ENCODE measurements at regions of chr5 and their contacts with region 1.

Region 1: DNA sequence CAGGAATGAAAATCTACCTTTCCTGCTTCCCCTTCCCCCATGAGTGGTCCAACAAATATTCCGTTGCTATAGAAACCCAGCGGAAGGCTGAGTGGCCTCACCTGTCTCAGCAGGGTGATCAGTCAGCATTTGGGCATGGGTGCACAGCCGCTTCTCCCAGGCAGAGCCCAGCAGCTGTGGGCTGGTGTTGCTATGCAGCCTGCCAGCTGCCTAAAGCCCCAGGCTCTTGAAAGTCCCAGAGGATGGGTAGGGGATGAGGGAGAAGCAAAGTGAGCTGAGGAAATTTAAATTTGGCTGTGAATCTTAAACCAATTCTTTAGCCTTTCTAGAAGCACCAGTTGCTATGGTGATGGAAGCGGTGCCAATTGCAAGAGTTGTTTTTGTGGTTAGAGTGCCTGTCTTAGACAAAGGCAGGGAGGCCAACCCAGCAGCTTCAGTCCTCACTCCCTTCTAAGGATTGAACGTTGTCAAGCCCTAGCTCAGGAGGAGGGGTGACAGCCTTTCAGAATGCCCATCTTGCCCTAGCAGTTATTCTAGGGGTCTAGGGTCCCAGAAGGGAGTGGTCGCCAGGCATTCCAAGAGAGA is 151.5 kb upstream of the PITX1 start:
- DNase-seq: no peak
- ATAC-seq: no peak
- H3K4me3 ChIP-seq: no peak overlapping the region
- H3K27ac ChIP-seq: no peak overlapping the region
- H3K4me1 ChIP-seq: no peaks in the 10 kb centered on the region
- CTCF ChIP-seq: no peak
- EP300 ChIP-seq: no peak
- POLR2A ChIP-seq: no peak
- RAD21 ChIP-seq: no peak

Region 2: DNA sequence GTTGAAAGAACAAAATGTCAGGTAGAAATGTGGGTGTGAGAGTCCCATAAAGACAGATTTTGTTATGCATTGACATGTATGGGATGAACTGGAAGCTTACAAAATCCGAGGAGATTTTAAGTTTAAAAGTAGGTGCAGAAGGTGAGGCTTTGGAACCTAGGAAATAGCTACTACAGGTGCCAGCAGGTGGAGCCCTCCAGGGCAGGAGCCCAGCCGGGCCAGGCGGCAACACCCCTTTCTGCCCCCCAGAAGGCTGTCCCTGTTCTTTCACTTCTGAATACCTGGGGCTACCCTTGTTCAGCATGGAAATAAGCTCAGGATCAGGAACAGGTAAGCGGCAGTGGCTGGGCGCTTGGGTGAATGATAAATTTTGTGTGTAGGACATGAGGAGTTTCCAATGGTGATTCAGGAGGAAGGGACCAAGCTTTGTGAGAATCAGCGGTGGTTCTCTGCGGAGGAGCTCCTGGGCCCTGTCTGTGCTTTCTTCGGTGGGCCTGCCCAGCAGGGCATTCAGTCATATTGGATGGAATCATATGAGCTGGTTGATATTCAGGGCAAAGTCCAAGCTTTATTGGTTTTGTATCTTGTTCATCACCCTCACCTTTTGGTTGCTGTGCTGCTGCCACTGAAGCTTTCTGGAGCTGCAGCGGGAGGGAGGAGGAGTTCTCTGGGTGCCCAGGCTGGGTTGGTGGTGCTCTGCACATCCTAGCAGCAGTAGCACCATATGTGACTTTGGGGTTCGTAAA is 268.3 kb before region 1 on chr5:
- CTCF ChIA-PET with region 1: interaction called, 11 read pairs
- POLR2A ChIA-PET with region 1: no interaction called
- DNase-seq: peak in 1 of 2 experiments; percentile 16
- ATAC-seq: peak in 1 of 2 experiments; percentile 74; a peak in 3 of 6 replicates
- H3K4me3 ChIP-seq: no peak overlapping the region
- H3K27ac ChIP-seq: no peak overlapping the region
- H3K4me1 ChIP-seq: no peaks in the 10 kb centered on the region
- CTCF ChIP-seq: peak; percentile 46
- EP300 ChIP-seq: no peak
- POLR2A ChIP-seq: no peak
- RAD21 ChIP-seq: peak; percentile 40 to 50; a peak in 4 of 5 replicates

Region 3: DNA sequence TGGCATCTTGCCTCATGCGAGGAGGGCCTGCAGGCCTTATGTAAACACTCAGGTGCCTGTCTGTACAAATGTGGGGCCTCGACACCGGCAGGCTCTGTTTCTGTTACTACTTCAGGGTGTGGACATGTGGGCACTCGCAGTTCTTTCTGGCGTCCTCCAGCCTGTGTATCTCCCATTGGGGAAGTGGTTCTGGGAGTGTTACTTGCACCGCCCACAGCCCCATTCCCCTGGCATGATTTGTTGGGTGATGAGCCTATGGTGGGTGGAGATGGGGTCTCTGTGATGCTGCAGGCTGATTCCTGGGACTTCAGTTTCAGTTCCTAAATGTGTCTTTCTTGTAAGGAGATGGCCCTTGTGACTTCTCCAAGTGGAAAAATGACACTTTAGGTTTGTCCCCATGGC is 69.4 kb before region 1 on chr5:
- CTCF ChIA-PET with region 1: no interaction called
- POLR2A ChIA-PET with region 1: no interaction called
- DNase-seq: no peak
- ATAC-seq: no peak
- H3K4me3 ChIP-seq: no peak overlapping the region
- H3K27ac ChIP-seq: no peak overlapping the region
- H3K4me1 ChIP-seq: peaks cover 6% of the 10 kb centered on the region; the same call in 1 of the 3 replicates
- CTCF ChIP-seq: no peak
- EP300 ChIP-seq: no peak
- POLR2A ChIP-seq: no peak
- RAD21 ChIP-seq: no peak

Region 4: GRCh38 chr5:135398853-135399523 is 213.4 kb after region 1 on chr5 and contains the start of gene MACROH2A1:
- CTCF ChIA-PET with region 1: no interaction called
- POLR2A ChIA-PET with region 1: no interaction called
- DNase-seq: peak; percentile 63 to 86
- ATAC-seq: peak; percentile 90 to 92
- H3K4me3 ChIP-seq: peak within 1 kb of the TSS; percentile 97
- H3K27ac ChIP-seq: peak within 1 kb of the TSS; percentile 91 to 98
- H3K4me1 ChIP-seq: peaks cover 22% of the 10 kb centered on the region
- CTCF ChIP-seq: no peak
- EP300 ChIP-seq: no peak
- POLR2A ChIP-seq: peak; percentile 91
- RAD21 ChIP-seq: no peak
- polyA plus RNA-seq, gene MACROH2A1: 141 and 158 TPM in 2 replicates

Region 5: GRCh38 chr5:135535820-135536801 is 350.5 kb after region 1 on chr5 and contains the start of gene NEUROG1:
- CTCF ChIA-PET with region 1: no interaction called
- POLR2A ChIA-PET with region 1: no interaction called
- DNase-seq: no peak
- ATAC-seq: no peak
- H3K4me3 ChIP-seq: peak within 1 kb of the TSS; percentile 27
- H3K27ac ChIP-seq: no peak within 1 kb of the TSS
- H3K4me1 ChIP-seq: peaks cover 7% of the 10 kb centered on the region; the same call in 1 of the 3 replicates
- CTCF ChIP-seq: no peak
- EP300 ChIP-seq: no peak
- POLR2A ChIP-seq: no peak
- RAD21 ChIP-seq: no peak
- polyA plus RNA-seq, gene NEUROG1: not detected in 2 replicates

Measured in A549 (cell line).